ENCODE measurements at regions of chr15 and their contacts with region 1.

Region 1: GRCh38 chr15:90121086-90121485 is 18.8 kb upstream of the IDH2 start:
- DNase-seq: no peak
- ATAC-seq: no peak
- H3K4me3 ChIP-seq: no peak overlapping the region
- H3K4me3 Mint-ChIP-seq: no peak overlapping the region
- H3K27ac ChIP-seq: no peak overlapping the region
- H3K27ac Mint-ChIP-seq: no peak overlapping the region
- H3K4me1 ChIP-seq: no peaks in the 10 kb centered on the region
- H3K4me1 Mint-ChIP-seq: no peaks in the 10 kb centered on the region
- H3K27me3 ChIP-seq: no peaks in the 10 kb centered on the region
- H3K27me3 Mint-ChIP-seq: peaks cover 0 to 2% of the 10 kb centered on the region in 2 donors

Region 2: DNA sequence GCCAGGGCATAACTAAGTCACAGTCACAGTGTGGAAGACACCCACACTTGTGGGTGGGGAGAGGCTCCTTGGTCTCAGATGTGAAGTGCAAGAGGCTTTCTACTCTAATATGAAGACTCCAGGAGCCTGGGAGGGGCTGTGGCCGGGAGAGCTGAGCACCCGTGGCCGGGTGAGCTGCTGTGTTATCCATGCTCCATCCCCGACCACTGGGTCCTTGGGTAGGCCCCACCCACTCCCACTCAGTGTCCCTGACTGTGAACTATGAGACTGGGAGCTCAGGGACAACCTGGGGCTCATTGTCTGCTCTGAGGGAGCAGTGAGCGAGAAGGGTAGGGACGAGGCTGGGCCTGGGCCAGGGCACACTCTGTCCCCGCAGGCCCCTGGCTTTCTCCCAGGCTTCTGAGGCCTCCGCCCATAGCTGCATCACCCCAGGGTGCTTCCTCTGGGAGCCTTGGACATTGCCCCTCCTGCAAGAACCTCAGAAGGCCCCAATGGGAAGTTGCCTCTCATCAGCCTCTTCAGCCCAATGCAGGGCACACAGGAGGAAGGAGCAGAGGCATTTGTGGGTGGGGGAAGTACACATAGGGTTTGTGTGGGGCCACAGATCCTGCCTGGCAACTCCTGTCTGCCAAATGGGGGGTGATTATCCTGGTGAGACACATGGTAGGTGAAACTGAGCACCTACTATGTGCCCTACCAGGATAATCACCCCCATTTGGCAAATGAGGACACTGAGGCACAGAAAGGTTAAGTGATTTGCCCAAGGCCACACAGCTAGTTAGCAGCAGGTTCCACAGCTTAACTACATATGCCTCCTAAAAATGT is 308.9 kb before region 1 on chr15:
- CTCF ChIA-PET with region 1: no interaction called
- POLR2A ChIA-PET with region 1: no interaction called
- DNase-seq: no peak
- ATAC-seq: no peak
- H3K4me3 ChIP-seq: no peak overlapping the region
- H3K4me3 Mint-ChIP-seq: no peak overlapping the region
- H3K27ac ChIP-seq: no peak overlapping the region
- H3K27ac Mint-ChIP-seq: no peak overlapping the region
- H3K4me1 ChIP-seq: peaks cover 2 to 18% of the 10 kb centered on the region in 2 experiments
- H3K4me1 Mint-ChIP-seq: peaks cover 7 to 15% (median 8%) of the 10 kb centered on the region in 3 donors
- H3K27me3 ChIP-seq: peaks cover 0 to 51% of the 10 kb centered on the region in 2 experiments
- H3K27me3 Mint-ChIP-seq: peaks cover 27 to 41% of the 10 kb centered on the region in 2 donors

Region 3: GRCh38 chr15:90921887-90922286 is 800.8 kb after region 1 on chr15:
- CTCF ChIA-PET with region 1: no interaction called
- POLR2A ChIA-PET with region 1: interaction called in 1 of 2 experiments, 11 read pairs
- DNase-seq: no peak
- ATAC-seq: no peak
- H3K4me3 ChIP-seq: no peak overlapping the region
- H3K4me3 Mint-ChIP-seq: no peak overlapping the region
- H3K27ac ChIP-seq: no peak overlapping the region
- H3K27ac Mint-ChIP-seq: no peak overlapping the region
- H3K4me1 ChIP-seq: no peaks in the 10 kb centered on the region
- H3K4me1 Mint-ChIP-seq: no peaks in the 10 kb centered on the region
- H3K27me3 ChIP-seq: no peaks in the 10 kb centered on the region
- H3K27me3 Mint-ChIP-seq: no peaks in the 10 kb centered on the region